ENCODE measurements at regions of chr10 and their contacts with region 1.

Region 1: GRCh38 chr10:24518981-24519597 is 204.6 kb downstream of the ARHGAP21 start:
- H3K4me3 ChIP-seq: no peak overlapping the region
- H3K27ac ChIP-seq: no peak overlapping the region
- H3K4me1 ChIP-seq: no peaks in the 10 kb centered on the region
- CTCF ChIP-seq: peak; percentile 57; the same call in 1 of the 2 replicates

Region 2: DNA sequence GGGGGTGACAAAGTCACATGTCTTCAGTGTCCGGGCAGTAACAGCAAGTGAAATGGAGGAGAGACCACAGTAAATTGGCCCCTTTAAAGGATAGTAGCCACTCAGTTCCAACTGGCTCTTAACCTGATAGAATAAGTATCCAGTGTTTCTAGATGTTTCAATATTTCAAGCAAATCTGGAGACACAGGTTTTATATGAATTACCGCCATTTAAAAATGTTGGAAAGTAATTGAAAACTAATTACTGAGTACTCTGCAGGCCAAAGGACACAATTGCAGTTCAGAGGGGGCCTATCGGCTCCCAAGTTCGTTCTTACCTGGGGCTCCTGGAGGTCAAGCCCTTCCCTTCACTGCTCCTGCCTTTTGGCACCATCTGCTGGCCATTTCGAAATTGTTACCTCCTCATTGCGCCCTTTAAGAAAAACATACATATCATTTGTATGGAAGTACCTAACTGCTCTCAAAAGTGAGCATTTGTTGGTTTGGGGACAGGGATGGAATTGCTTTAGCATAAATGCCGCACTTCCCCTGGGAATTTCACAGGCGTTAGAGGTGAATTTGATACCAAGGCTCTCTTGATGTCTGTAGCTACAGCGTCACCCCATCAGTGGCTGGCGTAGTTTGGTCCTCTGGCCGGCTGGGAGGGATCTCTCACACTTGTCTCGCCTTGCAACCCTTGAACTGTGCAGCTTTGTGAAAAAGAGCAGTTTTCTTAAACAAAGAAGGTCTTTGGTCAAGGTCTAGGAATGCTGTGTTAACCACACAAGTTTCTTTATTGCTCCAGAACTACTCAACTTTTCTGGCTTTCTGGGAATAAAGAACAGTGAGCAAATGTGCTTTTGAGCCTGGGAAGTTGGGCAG is 15.4 kb before region 1 on chr10:
- CTCF ChIA-PET with region 1: interaction called, 36 read pairs
- POLR2A ChIA-PET with region 1: no interaction called
- H3K4me3 ChIP-seq: no peak overlapping the region
- H3K27ac ChIP-seq: no peak overlapping the region
- H3K4me1 ChIP-seq: no peaks in the 10 kb centered on the region
- CTCF ChIP-seq: peak; percentile 53; the same call in 1 of the 2 replicates

Region 3: GRCh38 chr10:24533981-24534380 is 14.9 kb after region 1 on chr10:
- CTCF ChIA-PET with region 1: interaction called, 17 read pairs
- POLR2A ChIA-PET with region 1: no interaction called
- H3K4me3 ChIP-seq: no peak overlapping the region
- H3K27ac ChIP-seq: no peak overlapping the region
- H3K4me1 ChIP-seq: no peaks in the 10 kb centered on the region
- CTCF ChIP-seq: no peak

Region 4: DNA sequence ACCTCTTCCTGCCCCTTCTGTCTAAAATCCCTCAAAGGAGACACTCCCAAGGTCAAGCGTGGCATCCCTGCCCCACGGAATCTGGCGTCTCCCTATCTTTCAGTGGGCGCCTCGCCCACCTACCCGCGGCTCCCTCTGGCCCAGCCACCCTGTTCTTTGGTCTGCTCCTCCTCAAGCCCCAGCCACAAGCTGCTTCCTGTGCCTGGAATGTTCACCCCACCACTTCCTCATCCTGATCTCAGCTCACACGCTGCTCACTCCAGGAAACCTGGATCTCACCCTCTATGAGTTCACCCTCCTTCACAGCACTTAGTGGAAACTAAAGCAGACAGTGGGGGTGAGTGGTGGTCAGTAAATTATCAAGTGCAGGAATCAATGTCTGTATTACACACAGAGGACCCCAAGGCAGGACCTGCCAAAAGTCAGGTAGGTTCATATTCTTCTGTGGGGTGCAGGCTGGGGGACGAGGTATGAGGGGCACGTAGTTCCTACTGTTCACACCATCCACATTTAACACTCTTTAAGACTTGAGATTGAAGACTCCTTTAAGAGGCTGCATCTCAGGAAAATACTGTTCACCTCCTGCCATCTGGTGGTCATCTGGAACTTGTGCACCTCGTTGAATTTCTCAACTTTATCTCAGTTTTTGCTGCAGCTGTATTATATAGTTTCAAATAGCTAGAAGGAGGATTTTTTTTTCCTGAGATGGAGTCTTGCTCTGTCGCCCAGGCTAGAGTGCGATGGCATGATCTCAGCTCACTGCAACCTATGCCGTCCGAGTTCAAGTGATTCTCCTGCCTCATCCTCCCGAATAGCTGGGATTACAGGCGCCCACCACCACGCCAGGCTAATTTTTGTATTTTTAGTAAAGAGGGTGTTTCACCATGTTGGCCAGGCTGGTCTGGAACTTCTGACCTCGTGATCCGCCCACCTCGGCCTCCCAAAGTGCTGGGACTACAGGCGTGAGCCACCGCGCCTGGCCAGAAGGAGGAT is 38.0 kb after region 1 on chr10:
- CTCF ChIA-PET with region 1: interaction called, 23 read pairs
- POLR2A ChIA-PET with region 1: no interaction called
- H3K4me3 ChIP-seq: no peak overlapping the region
- H3K27ac ChIP-seq: no peak overlapping the region
- H3K4me1 ChIP-seq: peaks cover 8% of the 10 kb centered on the region
- CTCF ChIP-seq: peak; percentile 18; the same call in 1 of the 2 replicates

Region 5: GRCh38 chr10:24597426-24597825 is 78.3 kb after region 1 on chr10:
- CTCF ChIA-PET with region 1: no interaction called
- POLR2A ChIA-PET with region 1: no interaction called
- H3K4me3 ChIP-seq: no peak overlapping the region
- H3K27ac ChIP-seq: no peak overlapping the region
- H3K4me1 ChIP-seq: no peaks in the 10 kb centered on the region
- CTCF ChIP-seq: no peak

Region 6: GRCh38 chr10:24731942-24732341 is 212.9 kb after region 1 on chr10:
- CTCF ChIA-PET with region 1: no interaction called
- POLR2A ChIA-PET with region 1: no interaction called
- H3K4me3 ChIP-seq: no peak overlapping the region
- H3K27ac ChIP-seq: no peak overlapping the region
- H3K4me1 ChIP-seq: peaks cover 8% of the 10 kb centered on the region
- CTCF ChIP-seq: no peak

Region 7: DNA sequence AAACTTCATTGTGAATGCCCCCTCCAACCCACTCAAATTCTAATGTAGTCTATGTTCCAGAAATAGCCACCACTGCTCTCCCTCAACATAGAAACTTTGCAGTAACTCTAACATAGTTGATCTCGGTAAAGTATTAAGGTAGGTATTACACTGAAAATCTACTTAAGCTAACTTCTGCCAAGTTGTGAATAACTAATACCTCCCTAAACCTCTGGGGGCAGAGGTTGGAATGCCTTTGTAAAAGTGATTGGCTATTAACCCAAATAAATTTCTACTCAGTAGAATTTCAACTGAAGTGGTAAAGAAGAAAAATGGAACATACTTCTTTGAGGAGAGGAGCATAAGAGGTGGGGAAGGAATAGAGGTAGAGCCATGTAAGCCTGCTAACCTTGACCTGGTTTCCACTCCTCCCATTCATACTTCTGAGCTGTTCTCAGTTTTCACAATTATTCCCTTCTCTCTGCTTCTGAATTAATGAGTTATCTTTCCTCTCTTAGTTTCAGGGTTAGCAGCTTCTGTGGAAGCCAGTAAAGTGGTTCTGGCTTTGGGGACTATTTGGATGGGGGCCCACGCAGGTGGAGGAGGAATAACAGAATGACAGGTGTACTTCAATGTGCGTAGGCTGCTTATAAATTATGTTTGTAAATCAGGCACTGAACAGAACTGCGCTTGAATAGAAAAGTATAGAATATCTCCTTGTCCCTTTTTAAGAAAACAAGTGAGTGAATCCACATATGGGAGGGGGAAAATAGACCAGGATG is 1568.4 kb after region 1 on chr10:
- CTCF ChIA-PET with region 1: no interaction called
- POLR2A ChIA-PET with region 1: no interaction called
- H3K4me3 ChIP-seq: no peak overlapping the region
- H3K27ac ChIP-seq: no peak overlapping the region
- H3K4me1 ChIP-seq: no peaks in the 10 kb centered on the region
- CTCF ChIP-seq: no peak

Measured in HEK293 (cell line).